Heart left ventricle (tissue), 16 donors: ENCODE measurements at regions of chr9 and their contacts with region 1.

Region 1: GRCh38 chr9:87336914-87337333 is 160.7 kb upstream of the DAPK1 start:
- DNase-seq: peak in 1 of 5 donors; percentile 18
- ATAC-seq: peak; percentile 20 to 75 (median 64)
- H3K4me3 ChIP-seq: peak overlapping the region in 10 of 12 donors; percentile 11 to 52 (median 30)
- H3K27ac ChIP-seq: no peak overlapping the region
- H3K4me1 ChIP-seq: peaks cover 0 to 10% (median 3%) of the 10 kb centered on the region in 12 donors
- H3K27me3 ChIP-seq: peaks cover 0 to 28% (median 11%) of the 10 kb centered on the region in 9 donors
- CTCF ChIP-seq: peak; percentile 44 to 78 (median 68)
- POLR2A ChIP-seq: no peak

Region 2: GRCh38 chr9:87193925-87194868 is 142.7 kb before region 1 on chr9:
- intact Hi-C with region 1: no loop called
- DNase-seq: no peak
- ATAC-seq: no peak
- H3K4me3 ChIP-seq: no peak overlapping the region
- H3K27ac ChIP-seq: peak overlapping the region in 1 of 12 donors; percentile 27
- H3K4me1 ChIP-seq: no peaks in the 10 kb centered on the region
- H3K27me3 ChIP-seq: peaks cover 0 to 16% (median 0%) of the 10 kb centered on the region in 9 donors
- CTCF ChIP-seq: no peak
- POLR2A ChIP-seq: no peak

Region 3: GRCh38 chr9:87656485-87656884 is 319.6 kb after region 1 on chr9:
- intact Hi-C with region 1: loop called in 1 of 10 experiments (anchors 2 kb)
- DNase-seq: no peak
- ATAC-seq: peak in 1 of 4 donors; percentile 34
- H3K4me3 ChIP-seq: no peak overlapping the region
- H3K27ac ChIP-seq: peak overlapping the region in 1 of 12 donors; percentile 50
- H3K4me1 ChIP-seq: peaks cover 0 to 23% (median 0%) of the 10 kb centered on the region in 12 donors
- H3K27me3 ChIP-seq: peaks cover 0 to 3% (median 0%) of the 10 kb centered on the region in 9 donors
- CTCF ChIP-seq: peak in 2 of 12 donors; percentile 21 to 23
- POLR2A ChIP-seq: no peak

Region 4: DNA sequence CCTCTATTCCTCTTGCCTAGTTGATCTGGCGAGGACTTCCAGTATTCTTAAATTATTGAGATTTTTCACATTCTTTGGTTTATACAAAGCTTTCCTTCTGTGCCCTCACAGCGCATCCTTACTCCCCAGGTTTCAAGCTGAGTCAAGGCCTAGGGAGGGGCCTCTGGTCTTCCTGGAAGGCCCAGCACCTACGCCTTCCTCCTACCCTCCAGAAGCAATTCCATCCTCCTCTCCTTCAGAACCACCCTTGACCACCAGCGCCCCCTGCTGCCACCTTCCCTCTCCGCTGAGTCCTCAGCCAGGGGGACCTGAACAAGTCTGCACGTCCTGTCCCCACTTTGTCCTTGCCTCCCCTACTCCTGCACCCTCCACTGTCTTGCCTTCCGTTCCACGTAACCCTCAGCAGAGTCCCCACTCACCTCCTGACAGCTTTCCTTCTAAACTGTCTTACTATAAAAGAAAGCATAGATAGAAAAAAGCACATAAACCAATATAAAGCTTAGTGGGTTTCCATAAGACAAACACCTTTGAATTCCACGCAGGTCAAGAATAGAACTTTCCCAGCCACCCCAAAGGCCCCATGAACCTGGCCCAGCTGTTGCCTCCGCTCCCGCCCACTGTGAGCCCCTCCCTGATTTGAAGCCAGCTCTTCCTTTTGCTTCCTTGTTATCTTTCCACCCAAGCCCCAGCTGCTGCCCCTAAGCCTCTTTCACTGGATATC is 326.0 kb after region 1 on chr9:
- intact Hi-C with region 1: loop called (anchors 1 to 2 kb)
- DNase-seq: peak; percentile 59 to 86 (median 67)
- ATAC-seq: peak; percentile 58 to 89 (median 72)
- H3K4me3 ChIP-seq: no peak overlapping the region
- H3K27ac ChIP-seq: no peak overlapping the region
- H3K4me1 ChIP-seq: no peaks in the 10 kb centered on the region
- H3K27me3 ChIP-seq: peaks cover 0 to 5% (median 0%) of the 10 kb centered on the region in 9 donors
- CTCF ChIP-seq: peak; percentile 65 to 84 (median 74)
- POLR2A ChIP-seq: no peak

Region 5: GRCh38 chr9:87812375-87813118 is 475.6 kb after region 1 on chr9:
- intact Hi-C with region 1: loop called in 2 of 10 experiments (anchors 5 kb)
- DNase-seq: no peak
- ATAC-seq: peak in 3 of 4 donors; percentile 46 to 62 (median 56)
- H3K4me3 ChIP-seq: no peak overlapping the region
- H3K27ac ChIP-seq: no peak overlapping the region
- H3K4me1 ChIP-seq: peaks cover 0 to 16% (median 0%) of the 10 kb centered on the region in 12 donors
- H3K27me3 ChIP-seq: peaks cover 0 to 23% (median 0%) of the 10 kb centered on the region in 9 donors
- CTCF ChIP-seq: peak; percentile 78 to 94 (median 90)
- POLR2A ChIP-seq: no peak